Adrenal gland (tissue), 19 donors: ENCODE measurements at regions of chr15 and their contacts with region 1.

Region 1: GRCh38 chr15:47473832-47474231 is 243.5 kb upstream of the SEMA6D start:
- DNase-seq: peak; percentile 7 to 58 (median 23)
- H3K4me3 ChIP-seq: no peak overlapping the region
- H3K27ac ChIP-seq: no peak overlapping the region
- H3K4me1 ChIP-seq: peaks cover 0 to 6% of the 10 kb centered on the region in 2 donors
- H3K27me3 ChIP-seq: no peaks in the 10 kb centered on the region
- CTCF ChIP-seq: no peak
- POLR2A ChIP-seq: no peak

Region 2: GRCh38 chr15:47364230-47365141 is 109.3 kb before region 1 on chr15:
- intact Hi-C with region 1: no loop called
- DNase-seq: no peak
- H3K4me3 ChIP-seq: no peak overlapping the region
- H3K27ac ChIP-seq: no peak overlapping the region
- H3K4me1 ChIP-seq: no peaks in the 10 kb centered on the region
- H3K27me3 ChIP-seq: no peaks in the 10 kb centered on the region
- CTCF ChIP-seq: no peak
- POLR2A ChIP-seq: no peak

Region 3: DNA sequence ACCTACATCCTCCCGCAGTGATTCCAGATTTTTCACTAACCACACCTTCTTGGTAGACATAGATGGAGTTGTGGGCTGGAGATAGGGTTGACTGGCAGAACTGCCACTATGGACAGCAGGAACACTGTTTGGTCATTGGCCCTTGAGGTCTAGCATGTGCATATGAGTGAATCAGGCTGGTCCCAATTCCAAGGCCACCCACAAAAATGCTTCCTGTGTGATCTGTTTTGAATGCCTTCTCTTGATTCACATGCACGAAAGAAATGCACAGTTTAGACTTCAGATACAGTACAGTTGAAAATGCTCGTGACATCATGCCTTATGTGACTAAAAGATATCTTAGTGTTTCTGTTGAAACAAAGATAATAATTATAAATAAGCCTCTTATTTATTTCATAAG is 42.3 kb before region 1 on chr15:
- intact Hi-C with region 1: no loop called
- DNase-seq: no peak
- H3K4me3 ChIP-seq: no peak overlapping the region
- H3K27ac ChIP-seq: no peak overlapping the region
- H3K4me1 ChIP-seq: no peaks in the 10 kb centered on the region
- H3K27me3 ChIP-seq: no peaks in the 10 kb centered on the region
- CTCF ChIP-seq: no peak
- POLR2A ChIP-seq: no peak

Region 4: GRCh38 chr15:47523681-47524475 is 50.0 kb after region 1 on chr15:
- intact Hi-C with region 1: no loop called
- DNase-seq: no peak
- H3K4me3 ChIP-seq: no peak overlapping the region
- H3K27ac ChIP-seq: no peak overlapping the region
- H3K4me1 ChIP-seq: no peaks in the 10 kb centered on the region
- H3K27me3 ChIP-seq: no peaks in the 10 kb centered on the region
- CTCF ChIP-seq: no peak
- POLR2A ChIP-seq: no peak

Region 5: DNA sequence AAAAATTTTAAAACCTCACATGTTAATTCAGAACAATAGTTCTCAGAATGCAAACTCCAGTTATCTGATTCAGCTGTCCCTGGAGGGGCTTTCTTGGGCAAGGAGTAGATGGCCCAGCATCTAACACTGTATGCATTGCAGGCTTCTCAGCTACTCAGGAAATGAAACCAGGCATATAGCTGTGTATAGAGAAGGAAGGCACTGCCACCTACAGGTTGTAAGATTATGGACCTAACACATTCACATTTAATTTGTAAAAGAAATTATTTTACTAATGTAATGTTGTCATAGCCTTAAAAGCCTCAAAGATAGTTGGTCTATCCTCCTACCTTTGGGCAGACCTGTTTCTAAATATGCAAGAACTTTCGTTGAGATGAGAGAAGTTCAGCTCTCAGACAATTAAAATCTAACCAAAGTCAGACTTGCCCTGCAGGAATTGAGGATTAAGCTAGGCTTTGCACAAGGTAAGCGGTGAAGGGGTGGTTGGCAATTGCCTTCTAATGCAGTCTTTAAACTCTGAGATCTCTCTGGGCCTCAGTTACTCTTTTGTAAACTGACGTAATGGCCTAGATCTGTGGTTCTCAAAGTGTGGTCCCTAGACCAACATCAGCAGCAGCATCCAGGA is 514.2 kb after region 1 on chr15:
- intact Hi-C with region 1: loop called in 1 of 2 experiments (anchors 2 kb)
- DNase-seq: peak in 4 of 7 donors; percentile 28 to 45 (median 30)
- H3K4me3 ChIP-seq: no peak overlapping the region
- H3K27ac ChIP-seq: no peak overlapping the region
- H3K4me1 ChIP-seq: no peaks in the 10 kb centered on the region
- H3K27me3 ChIP-seq: no peaks in the 10 kb centered on the region
- CTCF ChIP-seq: peak; percentile 59 to 74 (median 68)
- POLR2A ChIP-seq: no peak